OCI-LY7 (cell line): ENCODE measurements at regions of chr6 and their contacts with region 1.

Region 1: DNA sequence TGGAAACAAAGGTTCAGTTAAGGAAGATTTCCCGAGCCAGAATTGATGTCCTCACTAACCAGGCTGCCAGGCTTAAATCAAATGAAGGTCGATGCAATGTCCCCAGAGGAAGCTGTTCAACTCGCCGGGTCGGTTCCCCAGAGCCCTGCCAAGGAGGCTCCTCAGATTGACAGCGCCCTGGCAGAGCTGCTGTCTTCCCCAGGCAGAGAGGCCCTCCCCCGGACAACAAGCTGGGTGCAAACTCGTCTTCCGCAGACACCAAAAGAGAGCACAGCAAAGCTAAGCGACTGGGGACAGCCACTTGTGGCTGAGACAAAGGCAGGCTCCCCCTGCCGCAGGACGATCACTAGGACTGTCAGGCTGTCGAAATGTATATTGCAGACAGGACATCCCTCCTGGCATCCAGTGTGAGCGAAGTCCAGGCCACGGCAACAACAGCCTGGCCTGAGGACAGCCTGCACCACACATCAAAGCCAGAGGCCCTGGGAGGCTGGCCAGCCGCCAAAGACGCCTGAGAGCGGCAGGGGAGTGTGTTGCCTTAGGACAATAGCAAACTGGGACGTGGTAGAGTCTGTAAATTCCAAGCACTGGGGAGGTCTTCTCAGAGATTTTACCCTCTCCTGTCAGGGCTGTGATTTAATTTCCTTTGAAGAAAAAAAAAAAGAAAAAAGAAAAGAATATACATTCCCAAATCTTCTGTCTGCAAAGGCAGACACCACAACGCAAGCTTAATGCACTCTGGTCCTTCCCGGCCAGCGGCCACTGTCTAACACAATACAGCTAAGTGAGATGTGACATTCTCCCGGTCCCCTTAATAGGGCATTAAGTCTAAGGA is 99.1 kb downstream of the HIVEP2 start:
- DNase-seq: peak; percentile 54
- H3K4me3 ChIP-seq: peak overlapping the region; percentile 64
- H3K27ac ChIP-seq: peak overlapping the region; percentile 65
- H3K4me1 ChIP-seq: peaks cover 98% of the 10 kb centered on the region
- CTCF ChIP-seq: 0 out of 2 replicates have a peak, but pooled peaks have one; percentile 21

Region 2: DNA sequence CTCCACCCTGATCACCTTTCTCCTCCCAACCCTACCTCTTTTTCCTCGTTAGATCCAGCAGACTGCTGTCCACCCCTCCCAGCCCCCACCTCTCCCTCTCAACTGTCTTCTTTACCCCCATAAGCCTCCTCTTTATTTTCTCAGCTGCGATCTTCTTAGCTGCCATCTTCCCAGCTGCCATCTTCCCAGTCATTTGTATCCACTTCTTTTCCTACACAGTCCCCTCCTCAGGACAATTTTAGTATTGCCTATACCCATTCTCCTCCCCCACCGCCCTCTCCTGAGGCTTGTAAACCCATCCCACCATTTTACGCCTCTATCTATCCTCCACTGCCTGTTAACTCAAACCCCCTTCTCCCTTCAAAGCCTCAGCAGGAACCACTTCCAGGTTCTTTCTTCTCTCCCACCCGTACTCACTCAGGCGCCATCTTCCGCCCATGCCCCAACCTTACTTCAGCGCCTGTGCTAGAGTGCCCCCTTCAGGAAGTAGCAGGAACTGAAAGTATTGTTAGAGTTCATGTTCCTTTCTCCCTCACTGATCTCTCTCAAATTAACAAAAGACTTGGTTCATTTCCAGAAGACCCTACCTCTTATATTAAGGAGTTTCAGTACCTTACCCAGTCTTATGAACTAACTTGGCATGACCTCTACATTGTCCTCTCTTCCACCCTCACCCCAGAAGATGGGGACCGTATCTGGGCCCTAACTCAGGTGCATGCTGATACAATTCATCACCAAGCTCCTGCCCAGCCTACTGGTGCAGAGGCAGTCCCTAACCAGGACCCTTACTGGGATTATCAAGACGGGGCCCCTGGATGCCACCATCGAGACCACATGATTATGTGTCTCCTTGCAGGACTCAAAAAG is 308.0 kb before region 1 on chr6:
- CTCF ChIA-PET with region 1: no interaction called
- POLR2A ChIA-PET with region 1: no interaction called
- intact Hi-C with region 1: no loop called
- DNase-seq: peak; percentile 29
- H3K4me3 ChIP-seq: no peak overlapping the region
- H3K27ac ChIP-seq: no peak overlapping the region
- H3K4me1 ChIP-seq: no peaks in the 10 kb centered on the region
- CTCF ChIP-seq: peak; percentile 80

Region 3: GRCh38 chr6:142756215-142756634 is 89.6 kb before region 1 on chr6:
- CTCF ChIA-PET with region 1: no interaction called
- POLR2A ChIA-PET with region 1: no interaction called
- intact Hi-C with region 1: no loop called
- DNase-seq: no peak
- H3K4me3 ChIP-seq: no peak overlapping the region
- H3K27ac ChIP-seq: no peak overlapping the region
- H3K4me1 ChIP-seq: no peaks in the 10 kb centered on the region
- CTCF ChIP-seq: no peak

Region 4: GRCh38 chr6:142819603-142820337 is 26.1 kb before region 1 on chr6:
- CTCF ChIA-PET with region 1: no interaction called
- POLR2A ChIA-PET with region 1: interaction called, 18 read pairs
- intact Hi-C with region 1: loop called (anchors 1 kb)
- DNase-seq: peak; percentile 71
- H3K4me3 ChIP-seq: peak overlapping the region; percentile 67
- H3K27ac ChIP-seq: peak overlapping the region; percentile 60
- H3K4me1 ChIP-seq: peaks cover 35% of the 10 kb centered on the region
- CTCF ChIP-seq: no peak

Region 5: GRCh38 chr6:142827369-142827768 is 18.5 kb before region 1 on chr6:
- CTCF ChIA-PET with region 1: no interaction called
- POLR2A ChIA-PET with region 1: interaction called, 18 read pairs
- intact Hi-C with region 1: no loop called
- DNase-seq: no peak
- H3K4me3 ChIP-seq: no peak overlapping the region
- H3K27ac ChIP-seq: no peak overlapping the region
- H3K4me1 ChIP-seq: no peaks in the 10 kb centered on the region
- CTCF ChIP-seq: no peak

Region 6: GRCh38 chr6:142857233-142857761 is 11.5 kb after region 1 on chr6:
- CTCF ChIA-PET with region 1: interaction called, 3 read pairs
- POLR2A ChIA-PET with region 1: interaction called, 20 read pairs
- intact Hi-C with region 1: loop called (anchors 2 kb)
- DNase-seq: peak; percentile 86
- H3K4me3 ChIP-seq: peak overlapping the region; percentile 61
- H3K27ac ChIP-seq: peak overlapping the region; percentile 94
- H3K4me1 ChIP-seq: peaks cover 91% of the 10 kb centered on the region
- CTCF ChIP-seq: no peak

Region 7: GRCh38 chr6:143007646-143008045 is 161.8 kb after region 1 on chr6:
- CTCF ChIA-PET with region 1: no interaction called
- POLR2A ChIA-PET with region 1: no interaction called
- intact Hi-C with region 1: no loop called
- DNase-seq: no peak
- H3K4me3 ChIP-seq: no peak overlapping the region
- H3K27ac ChIP-seq: no peak overlapping the region
- H3K4me1 ChIP-seq: no peaks in the 10 kb centered on the region
- CTCF ChIP-seq: no peak

Region 8: GRCh38 chr6:143141442-143141841 is 295.6 kb after region 1 on chr6:
- CTCF ChIA-PET with region 1: no interaction called
- POLR2A ChIA-PET with region 1: no interaction called
- intact Hi-C with region 1: no loop called
- DNase-seq: no peak
- H3K4me3 ChIP-seq: no peak overlapping the region
- H3K27ac ChIP-seq: no peak overlapping the region
- H3K4me1 ChIP-seq: no peaks in the 10 kb centered on the region
- CTCF ChIP-seq: no peak